Heart left ventricle (tissue), 16 donors: ENCODE measurements at regions of chr6 and their contacts with region 1.

Region 1: DNA sequence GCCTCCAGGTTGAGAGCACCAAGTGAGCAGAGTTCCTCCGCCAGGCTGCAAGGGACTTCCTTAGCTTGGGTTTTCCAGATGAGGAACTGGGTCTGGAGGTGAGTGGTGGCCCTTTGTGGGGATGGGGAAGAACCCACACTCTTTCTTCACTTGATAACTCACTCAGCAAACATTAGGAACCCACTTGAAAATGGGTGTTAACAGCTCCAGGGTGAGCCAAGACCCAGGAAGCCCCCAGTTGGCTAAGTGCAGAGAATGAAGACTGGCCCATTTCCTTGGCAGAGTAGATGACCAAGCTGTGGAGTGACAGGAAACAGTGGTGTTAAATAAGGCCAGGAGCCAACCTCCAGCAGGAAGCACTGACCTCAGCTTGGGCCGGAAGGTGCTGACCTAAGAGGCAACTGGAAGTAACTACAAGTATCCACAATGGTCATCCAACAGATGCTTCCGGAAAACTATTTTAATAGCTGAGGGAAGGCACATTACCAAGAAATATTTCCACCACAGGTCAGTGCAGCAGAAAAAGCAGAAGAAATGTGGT is 22.7 kb downstream of the MRPL14 start:
- DNase-seq: peak in 4 of 5 donors; percentile 63 to 81 (median 70)
- ATAC-seq: peak; percentile 72 to 94 (median 77)
- H3K4me3 ChIP-seq: no peak overlapping the region
- H3K27ac ChIP-seq: peak overlapping the region in 9 of 12 donors; percentile 19 to 72 (median 53)
- H3K4me1 ChIP-seq: peaks cover 0 to 56% (median 36%) of the 10 kb centered on the region in 12 donors
- H3K27me3 ChIP-seq: no peaks in the 10 kb centered on the region
- CTCF ChIP-seq: no peak
- POLR2A ChIP-seq: no peak

Region 2: DNA sequence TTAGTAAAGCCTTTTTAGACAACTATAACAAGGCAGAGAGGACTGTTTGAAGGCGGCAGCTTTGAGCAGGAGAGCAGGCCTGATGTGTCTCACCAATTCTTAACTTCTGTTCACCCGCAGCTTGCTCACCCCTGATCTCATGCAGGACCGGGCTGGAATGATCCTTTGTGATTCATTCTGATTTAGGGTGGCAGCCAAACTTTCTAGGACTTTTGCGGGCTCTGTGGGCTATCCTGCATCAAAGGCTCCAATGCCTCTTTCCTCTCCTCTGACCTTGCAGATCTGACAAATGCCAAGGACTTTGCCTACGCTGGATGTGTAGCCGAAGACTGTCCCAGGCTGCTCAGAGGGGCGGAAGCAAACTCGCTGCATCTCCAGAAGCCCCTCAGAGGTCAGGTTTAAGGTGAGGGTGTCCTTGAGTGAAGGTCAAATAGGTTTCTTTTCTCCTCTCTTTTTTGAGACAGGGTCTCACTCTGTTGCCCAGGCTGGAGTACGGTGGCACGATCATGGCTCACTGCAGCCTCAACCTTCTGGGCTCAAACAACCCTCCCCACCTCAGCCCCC is 262.2 kb before region 1 on chr6:
- intact Hi-C with region 1: no loop called
- DNase-seq: no peak
- ATAC-seq: no peak
- H3K4me3 ChIP-seq: no peak overlapping the region
- H3K27ac ChIP-seq: no peak overlapping the region
- H3K4me1 ChIP-seq: peaks cover 0 to 19% (median 2%) of the 10 kb centered on the region in 12 donors
- H3K27me3 ChIP-seq: no peaks in the 10 kb centered on the region
- CTCF ChIP-seq: no peak
- POLR2A ChIP-seq: no peak

Region 3: DNA sequence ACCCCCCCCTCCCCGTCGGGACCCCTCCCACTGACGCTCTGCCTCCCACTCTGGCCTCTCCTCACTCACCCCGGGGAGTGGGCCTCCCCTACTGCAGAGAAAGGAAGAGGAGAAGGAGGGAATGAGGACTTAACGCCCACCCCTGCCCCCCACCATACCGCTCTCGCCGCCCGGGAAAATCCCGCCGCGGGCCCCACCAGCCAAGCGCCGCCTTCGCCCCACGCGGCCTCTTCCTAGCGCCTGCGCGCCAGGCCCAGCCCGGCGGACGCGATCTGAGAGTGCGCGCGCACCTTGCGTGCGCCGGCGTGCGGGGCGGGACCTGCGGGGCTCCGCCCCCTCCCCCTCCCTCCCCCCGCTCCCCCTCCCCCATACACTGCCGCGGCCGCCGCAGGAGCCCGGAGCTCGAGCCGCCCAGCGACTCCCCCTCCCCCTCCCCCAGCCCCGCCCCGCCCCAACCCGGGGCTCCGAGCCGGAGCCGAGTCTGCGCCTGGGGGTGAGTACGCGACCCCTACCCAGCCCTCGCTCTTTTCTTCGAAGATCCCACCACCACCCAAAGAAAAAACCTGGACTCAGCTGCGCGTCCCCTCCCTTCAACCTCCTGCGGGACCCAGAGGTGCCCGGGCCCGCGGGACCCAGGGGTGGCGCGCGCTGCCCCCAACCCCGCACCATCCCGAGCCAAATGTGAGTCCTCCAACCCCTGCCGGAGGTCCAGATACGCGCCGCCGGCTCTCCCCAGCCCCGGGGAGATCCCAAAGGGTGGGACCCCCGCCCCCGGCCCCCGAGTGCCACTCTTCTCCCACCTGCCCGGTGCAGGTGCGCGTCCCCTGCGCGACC is 22.9 kb after region 1 on chr6 and contains the starts of genes MRPL14 and TMEM63B:
- intact Hi-C with region 1: loop called in 1 of 10 experiments (anchors 2 kb)
- DNase-seq: peak; percentile 90 to 96 (median 92)
- ATAC-seq: peak; percentile 89 to 96 (median 95)
- H3K4me3 ChIP-seq: peak within 1 kb of the TSS; percentile 48 to 99 (median 96)
- H3K27ac ChIP-seq: peak within 1 kb of the TSS; percentile 66 to 98 (median 92)
- H3K4me1 ChIP-seq: peaks cover 5 to 70% (median 47%) of the 10 kb centered on the region in 12 donors
- H3K27me3 ChIP-seq: no peaks in the 10 kb centered on the region
- CTCF ChIP-seq: no peak
- POLR2A ChIP-seq: peak in 1 of 2 donors; percentile 64
- total RNA-seq, gene MRPL14: 35.3 to 60.2 (median 44.1) TPM
- total RNA-seq, gene TMEM63B: 36.2 to 52.9 (median 43.0) TPM

Region 4: DNA sequence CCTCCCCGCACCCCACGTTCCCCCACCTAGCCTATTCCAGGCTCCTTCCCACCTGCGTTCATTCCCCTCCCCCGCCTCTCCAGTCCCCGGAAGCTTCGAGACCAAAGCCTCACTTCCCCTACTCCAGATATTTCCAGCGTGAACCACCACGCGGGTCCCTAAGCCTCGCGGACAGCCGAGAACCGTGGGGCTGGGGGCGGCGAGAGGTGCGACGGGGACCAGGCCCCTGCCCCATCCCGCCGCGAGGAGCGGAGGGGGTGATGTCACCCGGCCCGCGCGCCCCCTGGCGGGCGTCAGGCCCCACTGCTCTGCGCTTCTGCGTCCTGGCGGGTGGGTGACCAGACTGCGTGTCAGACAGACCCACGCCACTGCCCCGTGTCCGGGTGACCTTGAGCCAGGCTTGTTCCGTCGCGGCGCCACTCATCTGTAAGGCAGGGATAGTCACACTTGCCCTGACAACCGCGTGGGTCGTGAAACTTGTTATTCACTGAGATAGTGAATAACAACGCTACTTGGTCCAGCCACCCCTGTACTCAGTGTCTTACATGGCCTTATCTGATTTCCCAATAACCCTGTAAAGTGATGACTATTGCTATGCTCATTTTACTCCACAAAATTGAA is 133.4 kb after region 1 on chr6:
- intact Hi-C with region 1: loop called in 8 of 10 experiments (anchors 5 to 10 kb)
- DNase-seq: peak; percentile 80 to 91 (median 83)
- ATAC-seq: peak; percentile 30 to 81 (median 74)
- H3K4me3 ChIP-seq: peak overlapping the region; percentile 32 to 75 (median 62)
- H3K27ac ChIP-seq: peak overlapping the region; percentile 87 to 99 (median 95)
- H3K4me1 ChIP-seq: peaks cover 3 to 52% (median 39%) of the 10 kb centered on the region in 12 donors
- H3K27me3 ChIP-seq: no peaks in the 10 kb centered on the region
- CTCF ChIP-seq: peak; percentile 95 to 100 (median 98)
- POLR2A ChIP-seq: peak in 1 of 2 donors; percentile 29